Activated CD8-positive, alpha-beta T cell treated with anti-CD3 and anti-CD28 coated beads, Interleukin-2, amount 10 ng/mL, durations not matched to agents 7 days and 5 days (primary cell): ENCODE measurements at regions of chr5 and their contacts with region 1.

Region 1: GRCh38 chr5:139633295-139634027 is 14.7 kb upstream of the CXXC5 start:
- DNase-seq: peak; percentile 78
- ATAC-seq: peak; percentile 43
- H3K4me3 Mint-ChIP-seq: no peak overlapping the region
- H3K27ac Mint-ChIP-seq: peak overlapping the region; percentile 44
- H3K4me1 Mint-ChIP-seq: peaks cover 41% of the 10 kb centered on the region
- H3K27me3 Mint-ChIP-seq: no peaks in the 10 kb centered on the region

Region 2: DNA sequence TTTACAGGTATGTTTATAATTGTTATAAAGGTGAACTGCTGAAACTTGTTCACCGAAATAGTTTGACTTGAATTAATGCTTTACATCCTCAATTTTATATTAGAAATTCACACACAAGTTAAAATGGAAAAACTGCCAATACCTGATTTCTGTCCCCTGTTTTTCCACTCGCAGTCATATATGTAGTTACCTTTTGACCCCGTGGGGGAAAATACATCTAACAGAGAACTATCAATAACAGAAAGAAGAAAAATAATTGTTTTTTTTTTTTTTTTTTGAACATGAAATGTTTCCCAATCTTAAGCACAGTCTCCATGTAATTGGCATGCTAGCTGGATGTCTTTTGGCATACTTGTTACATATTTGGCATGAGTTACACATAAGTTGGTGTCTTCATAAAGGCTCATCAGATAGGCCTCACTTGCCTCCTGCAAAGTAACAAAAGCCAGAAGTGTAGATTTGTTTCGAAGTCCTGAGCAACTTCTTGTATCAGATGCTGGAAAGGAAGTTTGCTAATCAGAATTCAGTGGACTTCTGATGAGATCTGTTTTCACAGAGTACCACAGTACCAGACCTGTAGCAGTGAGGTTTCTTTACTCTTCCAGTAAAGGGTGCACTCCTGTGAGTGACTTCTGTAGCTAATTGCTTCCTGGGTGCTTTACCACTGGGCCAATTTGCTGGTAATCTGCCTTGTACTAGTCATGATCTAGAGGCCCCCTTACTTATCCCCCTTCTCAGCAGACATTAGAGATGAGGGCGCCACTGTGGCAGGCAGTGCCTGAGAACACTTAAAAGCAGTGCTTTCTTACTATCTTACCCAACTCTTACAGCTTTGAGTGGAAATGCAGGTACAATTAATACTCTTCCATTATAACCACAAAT is 21.5 kb before region 1 on chr5:
- CTCF ChIA-PET with region 1: interaction called, 10 read pairs
- POLR2A ChIA-PET with region 1: no interaction called
- DNase-seq: no peak
- ATAC-seq: no peak
- H3K4me3 Mint-ChIP-seq: no peak overlapping the region
- H3K27ac Mint-ChIP-seq: peak overlapping the region; percentile 60
- H3K4me1 Mint-ChIP-seq: peaks cover 16% of the 10 kb centered on the region
- H3K27me3 Mint-ChIP-seq: no peaks in the 10 kb centered on the region

Region 3: DNA sequence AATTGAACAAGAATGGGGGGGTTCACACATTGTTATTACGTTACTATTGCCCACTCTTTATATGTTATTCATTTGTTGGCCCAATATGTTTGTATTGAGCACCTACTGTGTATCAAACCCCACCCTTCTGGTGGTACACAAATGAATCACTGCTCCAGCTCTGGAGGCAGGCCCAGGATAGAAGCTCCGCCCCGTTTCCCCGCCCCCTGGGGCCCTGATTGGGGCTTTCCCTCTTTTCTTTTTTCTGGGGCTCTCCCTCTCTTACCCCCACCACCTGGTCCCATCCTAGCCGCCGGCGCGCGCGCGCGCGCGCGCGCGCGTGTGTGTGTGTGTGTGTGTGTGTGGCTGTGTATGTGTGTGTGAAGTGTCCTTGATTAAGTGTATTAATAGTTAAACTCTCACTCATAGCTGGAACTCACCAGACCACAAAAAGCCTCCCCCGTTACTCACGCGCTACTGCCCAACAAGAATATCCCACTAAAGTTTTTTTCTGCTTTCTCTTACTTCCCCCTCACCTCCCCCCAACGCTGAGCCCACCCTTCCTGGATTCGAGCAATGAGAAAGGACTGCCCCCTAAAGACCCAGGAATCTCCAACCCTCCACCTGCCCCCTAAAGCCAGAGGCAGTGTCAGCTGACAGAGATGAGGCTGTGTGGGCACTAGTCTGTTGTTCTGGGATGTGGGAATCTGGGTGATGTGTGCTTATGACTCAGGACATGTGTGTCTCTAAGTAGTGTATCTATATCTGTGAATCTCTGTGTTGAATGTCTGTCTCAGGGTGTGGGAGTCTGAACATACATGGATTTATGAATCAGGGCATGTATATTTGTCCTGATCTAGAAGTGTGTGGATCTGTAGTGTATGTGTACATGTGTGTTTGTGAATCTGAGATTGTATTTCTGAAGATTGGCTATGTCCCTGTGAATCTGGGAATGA is 18.7 kb after region 1 on chr5:
- CTCF ChIA-PET with region 1: interaction called, 100 read pairs
- POLR2A ChIA-PET with region 1: interaction called, 12 read pairs
- DNase-seq: peak; percentile 76
- ATAC-seq: peak; percentile 46
- H3K4me3 Mint-ChIP-seq: no peak overlapping the region
- H3K27ac Mint-ChIP-seq: peak overlapping the region; percentile 31
- H3K4me1 Mint-ChIP-seq: peaks cover 54% of the 10 kb centered on the region
- H3K27me3 Mint-ChIP-seq: peaks cover 41% of the 10 kb centered on the region

Region 4: DNA sequence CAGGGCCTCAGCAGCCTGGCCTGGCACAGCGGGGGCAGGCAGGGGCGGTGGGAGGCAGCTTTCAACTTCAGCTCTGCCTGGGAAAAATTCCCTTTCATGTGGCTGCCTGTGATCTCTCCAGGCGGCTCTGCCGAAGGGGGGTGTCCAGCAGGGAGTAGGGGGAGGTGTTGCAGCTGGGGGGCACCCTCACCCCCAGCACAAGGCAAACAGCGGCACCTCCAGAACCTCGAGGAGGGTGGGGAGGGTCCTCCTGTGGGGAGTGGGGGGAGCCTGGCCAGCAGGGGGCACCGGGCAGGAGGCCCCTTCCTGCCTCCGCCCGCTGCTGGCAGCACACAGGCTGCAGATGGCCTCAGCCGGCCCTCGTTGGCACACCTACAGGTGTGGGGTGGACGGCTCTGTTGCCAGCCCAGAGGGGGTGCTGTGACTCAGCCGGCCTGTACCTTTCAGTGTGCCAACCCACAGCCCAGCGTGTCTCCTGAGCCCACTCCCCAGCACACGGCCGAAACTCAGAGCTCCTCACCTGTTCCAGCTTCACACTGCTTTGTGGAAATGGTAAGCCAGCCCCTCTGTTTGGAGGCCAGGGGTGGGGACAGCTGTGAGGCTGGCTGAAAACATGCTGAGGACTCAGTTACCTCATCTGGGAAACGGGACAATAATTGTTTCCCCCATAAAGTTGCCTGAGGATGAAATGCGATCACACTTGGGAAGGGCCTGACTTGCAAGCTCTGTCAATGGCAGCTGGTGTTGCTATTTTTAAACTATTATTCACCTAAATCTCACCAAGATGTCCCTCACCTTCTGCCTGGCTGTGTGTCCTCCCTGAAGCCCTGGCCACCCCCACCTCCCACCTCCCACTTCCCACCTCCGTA is 51.7 kb after region 1 on chr5:
- CTCF ChIA-PET with region 1: interaction called, 185 read pairs
- POLR2A ChIA-PET with region 1: interaction called, 7 read pairs
- DNase-seq: no peak
- ATAC-seq: no peak
- H3K4me3 Mint-ChIP-seq: no peak overlapping the region
- H3K27ac Mint-ChIP-seq: no peak overlapping the region
- H3K4me1 Mint-ChIP-seq: peaks cover 21% of the 10 kb centered on the region
- H3K27me3 Mint-ChIP-seq: no peaks in the 10 kb centered on the region

Region 5: GRCh38 chr5:139711067-139711905 is 77.8 kb after region 1 on chr5:
- CTCF ChIA-PET with region 1: interaction called, 43 read pairs
- POLR2A ChIA-PET with region 1: interaction called, 5 read pairs
- DNase-seq: peak; percentile 69
- ATAC-seq: peak; percentile 66
- H3K4me3 Mint-ChIP-seq: peak overlapping the region; percentile 64
- H3K27ac Mint-ChIP-seq: no peak overlapping the region
- H3K4me1 Mint-ChIP-seq: peaks cover 17% of the 10 kb centered on the region
- H3K27me3 Mint-ChIP-seq: peaks cover 15% of the 10 kb centered on the region

Region 6: DNA sequence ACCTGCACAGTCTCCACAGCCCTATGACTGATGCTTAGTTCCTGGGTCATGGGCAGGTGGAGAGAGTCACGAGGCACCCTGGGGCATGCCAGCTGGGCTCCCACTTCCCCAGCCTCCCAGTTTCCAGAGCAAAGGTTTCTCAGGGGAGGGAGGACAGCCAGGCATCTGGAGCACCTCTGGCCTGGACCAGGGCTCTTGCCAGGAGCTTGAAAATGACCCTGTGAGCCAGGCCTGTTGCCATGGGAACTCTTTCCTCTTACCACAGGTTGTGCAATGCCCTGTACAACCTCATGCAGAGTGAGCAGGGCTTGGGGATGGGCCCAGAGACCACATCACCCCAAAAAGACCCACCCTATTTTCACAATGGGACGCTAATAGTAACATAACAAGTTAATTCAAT is 275.3 kb after region 1 on chr5:
- CTCF ChIA-PET with region 1: no interaction called
- POLR2A ChIA-PET with region 1: no interaction called
- DNase-seq: no peak
- ATAC-seq: no peak
- H3K4me3 Mint-ChIP-seq: no peak overlapping the region
- H3K27ac Mint-ChIP-seq: no peak overlapping the region
- H3K4me1 Mint-ChIP-seq: no peaks in the 10 kb centered on the region
- H3K27me3 Mint-ChIP-seq: no peaks in the 10 kb centered on the region